ENCODE measurements at regions of chr5 and their contacts with region 1.

Region 1: DNA sequence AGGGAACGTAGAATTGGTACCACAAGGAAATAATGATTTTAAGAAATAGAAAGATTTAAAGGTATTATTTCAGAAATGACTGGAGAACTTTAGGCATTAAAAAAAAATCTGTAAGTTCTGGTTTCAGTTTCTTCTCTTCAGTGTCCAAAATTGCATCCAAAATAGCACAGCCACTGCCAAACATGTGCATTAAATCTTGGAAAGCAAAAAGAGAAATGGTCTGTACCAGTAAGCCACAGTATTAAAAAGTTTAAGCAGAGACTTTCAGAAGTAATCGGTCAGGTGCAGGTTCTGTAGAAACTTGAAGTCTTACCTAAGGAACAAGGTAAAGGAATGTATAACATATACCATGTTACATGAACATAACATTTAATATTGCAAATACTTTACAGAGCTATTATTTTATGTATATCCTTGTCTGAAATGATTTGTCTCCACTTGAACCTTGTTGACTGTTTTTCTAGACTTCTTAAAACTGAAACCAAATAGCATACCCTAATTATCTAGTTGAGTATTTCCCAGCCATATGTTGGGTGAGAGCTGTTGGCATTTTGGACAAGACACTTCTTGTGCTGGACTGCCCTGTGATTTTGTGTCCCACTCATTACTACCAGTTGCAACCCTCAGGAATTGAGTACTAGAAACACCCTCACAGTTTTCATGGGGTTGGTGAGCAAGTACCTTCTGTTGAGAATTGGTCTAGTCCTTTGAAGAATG is 32.1 kb downstream of the NIPBL start:
- DNase-seq: no peak
- H3K4me3 ChIP-seq: no peak overlapping the region
- H3K27ac ChIP-seq: no peak overlapping the region
- H3K4me1 ChIP-seq: no peaks in the 10 kb centered on the region
- H3K27me3 ChIP-seq: no peaks in the 10 kb centered on the region
- CTCF ChIP-seq: no peak

Region 2: DNA sequence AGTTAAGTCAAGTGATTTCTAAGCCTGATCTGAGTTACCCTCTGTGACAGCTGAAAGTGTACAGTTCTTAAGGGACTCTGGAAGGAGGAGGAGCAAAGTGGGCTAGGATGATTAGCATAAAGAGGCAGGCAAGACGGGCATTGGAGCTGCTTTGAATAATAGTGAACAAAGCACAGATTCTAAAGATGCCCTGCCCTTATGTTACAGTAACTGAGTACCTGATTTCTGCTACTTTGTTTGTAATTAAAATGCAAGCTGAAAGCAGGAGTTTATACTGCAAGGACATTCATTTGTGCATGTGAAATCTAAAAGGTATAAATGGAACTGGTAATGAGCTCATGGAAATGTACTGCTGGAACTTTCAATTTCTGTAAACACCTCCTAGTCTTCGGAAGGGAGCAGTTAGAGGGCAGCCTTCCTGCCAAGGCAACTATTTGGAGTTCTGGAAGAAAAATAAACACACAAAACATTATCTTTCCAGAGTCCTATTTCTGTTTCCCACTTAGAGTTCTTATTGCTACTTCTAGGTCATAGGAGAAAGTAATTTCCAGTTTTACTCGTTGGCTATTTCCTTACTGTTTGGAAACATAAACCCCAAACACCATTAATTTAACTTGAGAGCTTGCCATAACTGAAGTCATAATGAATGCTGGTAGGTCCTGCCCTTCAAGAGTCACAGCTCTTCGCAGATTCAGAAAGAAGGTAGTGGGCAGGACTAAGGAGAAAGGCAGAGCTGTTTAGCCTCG is 606.7 kb before region 1 on chr5 and contains the start of gene RANBP3L:
- CTCF ChIA-PET with region 1: no interaction called
- POLR2A ChIA-PET with region 1: no interaction called
- intact Hi-C with region 1: no loop called
- DNase-seq: peak; percentile 63
- H3K4me3 ChIP-seq: peak within 1 kb of the TSS; percentile 15
- H3K27ac ChIP-seq: no peak within 1 kb of the TSS
- H3K4me1 ChIP-seq: peaks cover 10% of the 10 kb centered on the region
- H3K27me3 ChIP-seq: no peaks in the 10 kb centered on the region
- CTCF ChIP-seq: no peak
- total RNA-seq, gene RANBP3L: not detected in 2 replicates

Region 3: DNA sequence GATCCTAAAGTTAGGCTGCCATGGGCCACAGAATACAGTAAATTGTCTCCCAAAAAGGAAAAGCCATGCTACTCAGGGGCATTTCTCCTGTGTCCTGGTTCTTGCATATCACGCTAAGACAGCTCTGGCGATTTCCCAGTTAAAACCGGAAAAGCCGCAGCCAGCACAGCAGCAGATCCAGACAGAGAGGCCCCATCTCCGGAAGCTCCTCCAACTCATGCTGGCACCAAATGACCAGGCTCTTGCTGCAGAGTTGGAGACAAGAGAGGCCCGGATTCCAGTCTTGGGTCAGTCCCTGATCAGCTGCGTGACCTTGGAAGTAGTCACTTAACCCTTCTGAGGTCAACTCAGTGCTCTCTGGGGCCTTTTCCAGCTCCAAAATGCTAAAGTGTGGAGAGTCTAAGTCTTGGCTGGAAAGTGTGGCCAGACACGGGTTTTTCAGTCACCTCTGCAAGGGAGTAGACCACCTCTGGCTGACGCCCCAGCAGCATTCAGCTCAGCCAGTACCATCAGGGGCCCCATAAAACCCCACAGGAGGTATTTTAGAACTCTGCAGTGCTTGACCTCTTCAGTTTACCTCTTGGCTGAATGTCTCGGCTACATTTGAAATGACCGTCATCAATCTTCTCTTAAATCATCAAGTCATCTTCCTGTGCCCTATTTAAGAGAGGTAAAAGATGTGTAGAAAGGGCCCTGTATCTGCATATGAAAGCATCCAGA is 914.9 kb after region 1 on chr5:
- CTCF ChIA-PET with region 1: no interaction called
- POLR2A ChIA-PET with region 1: no interaction called
- intact Hi-C with region 1: loop called (anchors 5 kb)
- DNase-seq: peak; percentile 25
- H3K4me3 ChIP-seq: no peak overlapping the region
- H3K27ac ChIP-seq: no peak overlapping the region
- H3K4me1 ChIP-seq: peaks cover 15% of the 10 kb centered on the region
- H3K27me3 ChIP-seq: no peaks in the 10 kb centered on the region
- CTCF ChIP-seq: no peak